AG04450 (cell line): ENCODE measurements at regions of chr10 and their contacts with region 1.

Region 1: DNA sequence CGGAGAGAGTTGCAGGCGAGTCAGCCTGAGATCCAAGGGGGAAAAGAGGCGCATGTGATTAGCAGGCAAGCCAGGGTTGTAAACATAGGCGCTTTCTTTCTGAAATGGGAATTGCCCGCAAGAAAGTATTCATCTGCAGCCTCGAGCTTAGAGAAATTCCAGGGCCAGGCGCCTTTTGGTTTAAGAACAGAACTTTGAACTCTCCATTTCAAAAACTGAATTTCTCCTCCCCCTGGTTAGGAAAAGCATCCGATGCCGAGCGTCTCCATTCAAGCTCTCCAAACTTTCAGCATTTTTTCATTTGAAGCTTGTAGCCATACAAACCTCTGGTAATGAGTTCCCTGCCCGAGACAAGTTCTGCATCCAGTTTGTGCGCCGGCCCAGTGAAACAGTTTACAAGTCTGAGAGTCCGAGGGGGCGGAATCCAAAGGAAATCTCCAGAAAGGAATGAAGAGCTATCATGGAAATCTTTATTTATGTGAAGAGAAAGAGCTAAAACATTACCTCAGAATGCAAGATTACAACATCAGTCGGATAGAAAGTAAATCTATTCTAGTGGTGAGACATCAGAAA is 69.9 kb downstream of the FAM204A start:
- DNase-seq: peak; percentile 6
- H3K4me3 ChIP-seq: peak overlapping the region; percentile 21
- H3K27ac ChIP-seq: peak overlapping the region; percentile 58
- H3K27me3 ChIP-seq: peaks cover 4% of the 10 kb centered on the region
- CTCF ChIP-seq: no peak

Region 2: DNA sequence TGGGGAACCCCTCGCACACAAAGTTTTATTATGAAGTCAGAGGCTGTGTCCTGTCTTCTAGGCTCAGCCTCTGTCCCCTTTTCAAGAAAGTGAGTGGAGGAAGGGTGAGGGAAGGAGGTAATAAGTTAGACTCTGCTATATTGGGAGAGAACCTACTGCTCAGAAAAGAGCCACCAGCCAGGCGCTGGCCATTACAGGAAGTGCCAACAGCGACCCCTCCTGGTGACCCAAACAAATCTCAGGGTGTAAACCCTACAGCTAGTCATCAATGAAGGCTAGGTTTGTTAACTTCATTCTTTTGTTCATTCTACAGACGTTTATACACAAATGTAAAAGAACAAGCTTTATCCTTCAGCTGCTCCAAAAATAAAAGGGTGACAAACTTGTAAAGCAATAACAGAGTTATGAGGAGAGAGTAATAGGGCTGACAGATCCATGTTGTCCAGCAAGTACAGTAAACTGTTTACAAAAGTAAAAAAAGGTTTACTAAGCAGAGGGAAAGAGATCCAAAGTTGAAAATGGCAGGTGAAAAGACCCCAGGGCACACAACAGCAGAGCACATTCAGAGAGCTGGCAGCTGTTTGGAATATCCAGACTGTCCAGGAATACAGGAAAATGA is 12.8 kb before region 1 on chr10:
- CTCF ChIA-PET with region 1: interaction called, 22 read pairs
- POLR2A ChIA-PET with region 1: no interaction called
- DNase-seq: no peak
- H3K4me3 ChIP-seq: no peak overlapping the region
- H3K27ac ChIP-seq: no peak overlapping the region
- H3K27me3 ChIP-seq: no peaks in the 10 kb centered on the region
- CTCF ChIP-seq: peak; percentile 53